Heart right ventricle (tissue), 16 donors: ENCODE measurements at regions of chr22 and their contacts with region 1.

Region 1: GRCh38 chr22:41285820-41286638 is at the start of gene RANGAP1:
- DNase-seq: peak; percentile 98
- ATAC-seq: peak; percentile 99 to 100 (median 100)
- H3K4me3 ChIP-seq: peak within 1 kb of the TSS; percentile 69 to 98 (median 90)
- H3K27ac ChIP-seq: peak within 1 kb of the TSS; percentile 13 to 94 (median 83)
- H3K4me1 ChIP-seq: peaks cover 0 to 31% (median 25%) of the 10 kb centered on the region in 9 donors
- H3K27me3 ChIP-seq: no peaks in the 10 kb centered on the region
- CTCF ChIP-seq: peak in 7 of 9 donors; percentile 4 to 54 (median 36)
- total RNA-seq, gene RANGAP1: 26.5 to 53.8 (median 31.4) TPM

Region 2: DNA sequence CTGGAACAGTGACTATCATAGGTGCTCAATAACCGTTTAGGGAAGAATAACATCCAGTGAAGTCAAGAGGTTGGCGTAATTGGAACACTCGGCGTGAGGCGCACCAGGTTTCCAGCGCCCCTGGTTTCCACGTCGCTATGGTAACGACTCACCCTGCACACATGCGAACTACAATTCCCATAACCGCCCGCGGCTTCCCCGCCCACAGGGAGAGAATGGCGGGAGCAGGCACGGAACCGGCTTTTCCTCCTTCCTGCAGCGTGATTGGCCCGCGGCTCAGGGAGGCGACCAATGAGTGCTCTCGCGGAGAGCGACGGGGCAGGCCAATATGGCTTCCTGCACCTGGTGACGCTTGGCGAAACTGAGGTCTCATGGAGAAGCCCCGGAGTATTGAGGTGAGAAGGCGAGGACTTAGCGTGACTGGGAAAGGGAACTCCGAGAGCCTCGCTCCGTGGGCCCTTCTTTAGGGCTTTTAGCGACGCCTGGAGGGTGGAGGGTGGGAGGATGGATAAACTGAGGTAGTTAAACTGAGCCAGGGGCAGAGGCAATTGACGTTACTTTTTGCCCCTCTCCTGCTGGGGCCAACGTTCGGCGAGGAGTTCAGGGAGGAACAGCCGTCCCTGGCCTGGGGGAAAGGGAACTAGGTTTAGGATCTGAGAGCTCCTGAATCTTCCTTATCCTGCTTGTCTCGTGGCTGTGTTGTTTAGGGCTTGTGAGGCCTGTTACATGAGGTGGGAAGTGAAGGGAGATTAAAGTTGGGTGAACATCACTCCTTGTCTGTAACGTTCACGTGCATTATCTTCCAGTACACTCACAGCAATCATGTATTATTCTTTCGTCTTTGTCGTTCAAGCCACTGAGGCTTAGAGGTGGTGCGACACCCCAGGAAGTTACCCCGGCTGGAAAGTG is 80.8 kb before region 1 on chr22 and contains the start of gene L3MBTL2:
- intact Hi-C with region 1: loop called in 1 of 10 experiments (anchors 5 kb)
- DNase-seq: peak; percentile 98
- ATAC-seq: peak; percentile 98 to 100 (median 100)
- H3K4me3 ChIP-seq: peak within 1 kb of the TSS; percentile 58 to 98 (median 81)
- H3K27ac ChIP-seq: peak within 1 kb of the TSS; percentile 41 to 86 (median 82)
- H3K4me1 ChIP-seq: peaks cover 0 to 12% (median 9%) of the 10 kb centered on the region in 9 donors
- H3K27me3 ChIP-seq: no peaks in the 10 kb centered on the region
- CTCF ChIP-seq: no peak
- total RNA-seq, gene L3MBTL2: 12.0 to 18.5 (median 15.1) TPM

Region 3: GRCh38 chr22:41381329-41382097 is 95.5 kb after region 1 on chr22 and contains the start of gene TEF:
- intact Hi-C with region 1: loop called in 3 of 10 experiments (anchors 5 kb)
- DNase-seq: peak; percentile 98 to 99
- ATAC-seq: peak; percentile 89 to 93 (median 91)
- H3K4me3 ChIP-seq: peak within 1 kb of the TSS; percentile 61 to 93 (median 82)
- H3K27ac ChIP-seq: peak within 1 kb of the TSS; percentile 94 to 99 (median 96)
- H3K4me1 ChIP-seq: peaks cover 9 to 43% (median 24%) of the 10 kb centered on the region in 9 donors
- H3K27me3 ChIP-seq: no peaks in the 10 kb centered on the region
- CTCF ChIP-seq: no peak
- total RNA-seq, gene TEF: 8.6 to 29.1 (median 18.4) TPM